IMR-90 (cell line): ENCODE measurements at regions of chr11 and their contacts with region 1.

Region 1: DNA sequence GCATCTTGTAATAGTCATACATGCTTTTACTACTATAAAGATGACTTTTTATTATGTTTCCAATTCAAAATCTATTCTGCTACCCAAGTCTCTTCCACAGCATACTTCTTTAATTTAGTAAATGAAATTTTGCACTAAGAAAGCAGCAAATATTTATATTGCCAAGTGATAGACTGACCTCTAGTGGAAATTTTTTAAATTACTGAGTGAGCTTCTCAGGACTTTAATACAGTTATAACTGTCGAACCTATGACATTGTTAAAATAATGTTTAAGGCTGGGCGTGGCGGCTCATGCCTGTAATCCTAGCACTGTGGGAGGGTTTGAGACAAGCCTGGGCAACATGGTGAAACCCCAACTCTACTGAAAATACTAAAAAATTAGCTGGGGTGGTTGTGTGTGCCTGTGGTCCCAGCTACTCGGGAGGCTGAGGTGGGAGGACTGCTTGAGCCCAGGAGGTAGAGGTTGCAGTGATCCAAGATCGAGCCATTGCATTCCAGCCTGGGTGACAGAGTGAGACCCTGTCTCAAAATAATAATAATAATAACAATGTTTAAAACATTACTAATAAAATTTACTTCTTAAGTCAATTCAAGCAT is 27.3 kb downstream of the STK33 start:
- DNase-seq: peak; percentile 48
- ATAC-seq: peak; percentile 79
- H3K4me3 ChIP-seq: no peak overlapping the region
- H3K27ac ChIP-seq: no peak overlapping the region
- H3K4me1 ChIP-seq: no peaks in the 10 kb centered on the region
- H3K27me3 ChIP-seq: peaks cover 5% of the 10 kb centered on the region
- CTCF ChIP-seq: peak; percentile 74
- POLR2A ChIP-seq: no peak
- RAD21 ChIP-seq: peak; percentile 79

Region 2: GRCh38 chr11:8192016-8192895 is 374.5 kb before region 1 on chr11:
- CTCF ChIA-PET with region 1: no interaction called
- POLR2A ChIA-PET with region 1: no interaction called
- dilution Hi-C with region 1: no loop called
- in situ Hi-C with region 1: no loop called
- intact Hi-C with region 1: loop called (anchors 1 kb)
- DNase-seq: peak; percentile 63
- ATAC-seq: peak; percentile 98
- H3K4me3 ChIP-seq: no peak overlapping the region
- H3K27ac ChIP-seq: no peak overlapping the region
- H3K4me1 ChIP-seq: no peaks in the 10 kb centered on the region
- H3K27me3 ChIP-seq: peaks cover 13% of the 10 kb centered on the region
- CTCF ChIP-seq: peak; percentile 82
- POLR2A ChIP-seq: no peak
- RAD21 ChIP-seq: peak; percentile 73

Region 3: GRCh38 chr11:8225589-8226036 is 341.1 kb before region 1 on chr11:
- CTCF ChIA-PET with region 1: interaction called, 3 read pairs
- POLR2A ChIA-PET with region 1: no interaction called
- dilution Hi-C with region 1: no loop called
- in situ Hi-C with region 1: loop called (anchors 5 kb)
- intact Hi-C with region 1: loop called (anchors 1 kb)
- DNase-seq: peak; percentile 52
- ATAC-seq: peak; percentile 79
- H3K4me3 ChIP-seq: no peak overlapping the region
- H3K27ac ChIP-seq: no peak overlapping the region
- H3K4me1 ChIP-seq: no peaks in the 10 kb centered on the region; the same call in 1 of the 2 replicates
- H3K27me3 ChIP-seq: peaks cover 22% of the 10 kb centered on the region
- CTCF ChIP-seq: peak; percentile 86
- POLR2A ChIP-seq: no peak
- RAD21 ChIP-seq: peak; percentile 85

Region 4: GRCh38 chr11:8328848-8329330 is 237.8 kb before region 1 on chr11:
- CTCF ChIA-PET with region 1: no interaction called
- POLR2A ChIA-PET with region 1: no interaction called
- dilution Hi-C with region 1: no loop called
- in situ Hi-C with region 1: loop called (anchors 10 kb)
- intact Hi-C with region 1: loop called (anchors 2 kb)
- DNase-seq: peak; percentile 75
- ATAC-seq: peak; percentile 92
- H3K4me3 ChIP-seq: no peak overlapping the region
- H3K27ac ChIP-seq: no peak overlapping the region
- H3K4me1 ChIP-seq: peaks cover 3% of the 10 kb centered on the region; the same call in 1 of the 2 replicates
- H3K27me3 ChIP-seq: peaks cover 11% of the 10 kb centered on the region
- CTCF ChIP-seq: peak; percentile 67
- POLR2A ChIP-seq: no peak
- RAD21 ChIP-seq: peak; percentile 49

Region 5: DNA sequence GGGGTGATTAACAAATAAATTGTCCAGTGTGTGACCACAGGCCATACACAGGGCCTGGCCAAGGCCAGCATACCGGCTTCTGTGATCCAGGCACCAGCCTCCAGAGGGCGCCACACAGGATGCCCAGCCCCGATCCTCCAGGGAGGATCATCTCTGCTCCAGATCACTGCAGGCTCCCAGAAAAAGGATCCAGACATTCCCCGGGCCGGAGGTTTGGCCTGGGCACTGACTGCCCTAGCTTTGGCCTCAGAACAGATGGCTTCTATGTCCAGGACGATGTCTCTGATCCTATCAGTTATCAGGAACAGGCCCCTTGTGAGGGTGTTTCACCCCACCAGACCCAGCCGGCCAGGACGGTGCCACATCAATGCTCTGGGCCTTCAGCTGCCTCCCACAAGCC is 228.6 kb before region 1 on chr11:
- CTCF ChIA-PET with region 1: no interaction called
- POLR2A ChIA-PET with region 1: no interaction called
- dilution Hi-C with region 1: no loop called
- in situ Hi-C with region 1: loop called (anchors 10 kb)
- intact Hi-C with region 1: loop called (anchors 2 kb)
- DNase-seq: peak; percentile 12
- ATAC-seq: peak; percentile 84
- H3K4me3 ChIP-seq: no peak overlapping the region
- H3K27ac ChIP-seq: no peak overlapping the region
- H3K4me1 ChIP-seq: no peaks in the 10 kb centered on the region
- H3K27me3 ChIP-seq: peaks cover 3% of the 10 kb centered on the region; the same call in 1 of the 2 replicates
- CTCF ChIP-seq: peak; percentile 56
- POLR2A ChIP-seq: no peak
- RAD21 ChIP-seq: peak; percentile 39

Region 6: DNA sequence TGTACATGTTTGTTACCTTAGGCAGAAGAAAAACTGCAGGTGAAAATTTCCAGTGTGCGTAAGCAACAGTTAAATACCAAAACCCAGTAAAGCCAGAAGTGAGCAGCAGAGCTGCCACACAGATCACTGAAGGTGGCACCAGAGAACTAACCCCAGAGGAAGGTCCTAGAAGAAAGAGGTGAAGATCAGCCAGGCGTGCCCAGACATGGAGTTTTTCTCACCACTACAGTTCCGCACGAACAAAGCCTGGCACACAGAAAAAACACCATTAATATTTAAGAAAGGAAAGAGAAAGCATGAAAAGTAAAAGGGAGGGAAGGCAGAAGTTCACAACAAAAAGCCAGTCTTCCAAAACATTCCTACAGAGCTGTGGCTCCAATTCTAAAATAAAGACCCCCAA is 33.4 kb before region 1 on chr11:
- CTCF ChIA-PET with region 1: no interaction called
- POLR2A ChIA-PET with region 1: no interaction called
- dilution Hi-C with region 1: no loop called
- in situ Hi-C with region 1: no loop called
- intact Hi-C with region 1: no loop called
- DNase-seq: no peak
- ATAC-seq: no peak
- H3K4me3 ChIP-seq: no peak overlapping the region
- H3K27ac ChIP-seq: no peak overlapping the region
- H3K4me1 ChIP-seq: no peaks in the 10 kb centered on the region
- H3K27me3 ChIP-seq: no peaks in the 10 kb centered on the region
- CTCF ChIP-seq: no peak
- POLR2A ChIP-seq: no peak
- RAD21 ChIP-seq: no peak